ENCODE measurements at regions of chr2 and their contacts with region 1.

Region 1: DNA sequence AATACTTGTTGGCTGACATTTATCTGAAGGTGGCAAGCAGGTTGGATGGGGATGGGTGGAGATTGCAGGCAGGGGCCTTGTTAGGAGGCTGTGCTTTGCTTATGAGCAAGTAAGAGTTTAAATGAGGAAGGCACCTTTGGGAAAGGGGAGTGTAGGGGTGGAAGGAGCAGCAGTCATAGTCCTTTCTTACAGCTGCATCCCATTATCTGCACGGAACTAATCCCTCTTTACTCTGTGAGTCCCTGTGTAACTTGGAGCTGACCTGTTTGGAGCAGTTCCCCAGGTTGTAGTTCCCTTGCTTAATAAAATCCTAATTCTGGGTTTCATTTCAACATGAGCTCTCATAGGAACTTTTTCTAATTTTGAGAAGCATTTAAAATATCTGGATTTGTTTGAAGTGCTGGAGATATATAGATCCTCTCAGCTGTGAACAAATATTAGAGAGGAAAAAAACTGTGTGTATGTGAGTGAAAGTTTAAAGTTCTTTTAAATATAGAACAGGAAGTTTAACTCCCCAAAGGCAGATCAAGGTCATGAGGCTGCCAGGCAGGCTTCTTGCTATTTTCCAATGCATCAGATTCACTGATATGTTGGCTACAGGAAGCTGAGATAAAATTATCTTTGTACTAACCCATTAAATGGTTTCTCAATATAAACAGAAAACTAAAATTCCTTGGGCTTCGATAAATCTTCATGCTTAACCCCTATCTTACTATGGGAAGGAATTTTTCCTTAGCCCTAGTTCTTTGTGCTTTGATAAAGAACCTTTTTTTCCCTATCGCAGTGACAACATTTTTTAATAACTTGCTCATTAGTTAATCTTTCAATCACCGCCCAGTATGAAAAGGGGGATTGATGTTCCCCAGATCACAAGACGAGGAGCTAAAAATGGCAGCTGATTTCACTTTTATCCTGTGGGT is 104.6 kb upstream of the EML6 start:
- DNase-seq: no peak
- ATAC-seq: peak in 7 of 8 donors; percentile 16 to 57 (median 42)
- H3K4me3 ChIP-seq: no peak overlapping the region
- H3K27ac ChIP-seq: peak overlapping the region; percentile 10 to 89 (median 72)
- H3K4me1 ChIP-seq: peaks cover 20 to 87% (median 78%) of the 10 kb centered on the region in 9 donors
- H3K27me3 ChIP-seq: no peaks in the 10 kb centered on the region
- CTCF ChIP-seq: no peak

Region 2: GRCh38 chr2:54579684-54580620 is 39.0 kb before region 1 on chr2:
- intact Hi-C with region 1: loop called in 1 of 10 experiments (anchors 5 kb)
- DNase-seq: no peak
- ATAC-seq: no peak
- H3K4me3 ChIP-seq: no peak overlapping the region
- H3K27ac ChIP-seq: peak overlapping the region in 8 of 10 donors; percentile 5 to 69 (median 49)
- H3K4me1 ChIP-seq: peaks cover 51 to 100% (median 94%) of the 10 kb centered on the region in 9 donors
- H3K27me3 ChIP-seq: no peaks in the 10 kb centered on the region
- CTCF ChIP-seq: no peak